GM12878 (cell line): ENCODE measurements at regions of chr14 and their contacts with region 1.

Region 1: DNA sequence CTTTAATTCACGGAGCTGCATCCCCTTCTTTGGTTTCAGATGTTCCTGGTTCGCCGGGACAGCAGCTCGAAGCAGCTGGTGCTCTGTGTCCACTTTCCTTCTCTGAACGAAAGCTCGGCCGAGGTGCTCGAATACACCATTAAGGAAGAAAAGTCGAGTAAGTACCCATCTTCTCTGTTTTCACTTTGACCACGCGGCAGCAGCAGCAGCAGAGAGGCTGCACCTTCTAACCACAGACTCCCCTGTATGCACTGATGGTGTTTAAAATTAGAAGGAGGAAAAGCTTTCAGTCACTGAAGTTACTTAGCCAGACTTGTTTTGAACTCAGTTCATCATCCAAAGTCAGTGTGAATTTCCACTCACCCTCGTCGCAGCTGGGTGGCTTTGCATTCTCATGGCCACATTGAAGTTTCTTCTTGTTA is 63.8 kb downstream of the RIN3 start:
- DNase-seq: peak; percentile 89
- ATAC-seq: peak; percentile 88
- H3K4me3 ChIP-seq: peak overlapping the region; percentile 59; the same call in 1 of the 2 replicates
- H3K27ac ChIP-seq: peak overlapping the region; percentile 45
- H3K4me1 ChIP-seq: peaks cover 40% of the 10 kb centered on the region
- H3K27me3 ChIP-seq: no peaks in the 10 kb centered on the region
- CTCF ChIP-seq: no peak; a peak in 1 of 6 replicates
- EP300 ChIP-seq: peak; percentile 46 to 73; a peak in 2 of 4 replicates
- POLR2A ChIP-seq: no peak
- RAD21 ChIP-seq: peak; percentile 45

Region 2: GRCh38 chr14:92513204-92513973 is 63.9 kb before region 1 on chr14 and contains the start of gene RIN3:
- CTCF ChIA-PET with region 1: interaction called, 3 read pairs
- POLR2A ChIA-PET with region 1: interaction called, 6 read pairs
- RAD21 ChIA-PET with region 1: interaction called, 10 read pairs
- SMC1A ChIA-PET with region 1: interaction called, 6 read pairs
- in situ Hi-C with region 1: no loop called
- intact Hi-C with region 1: no loop called
- DNase-seq: no peak
- ATAC-seq: peak; percentile 83
- H3K4me3 ChIP-seq: peak within 1 kb of the TSS; percentile 49
- H3K27ac ChIP-seq: no peak within 1 kb of the TSS; the same call in 1 of the 2 replicates
- H3K4me1 ChIP-seq: peaks cover 10% of the 10 kb centered on the region
- H3K27me3 ChIP-seq: no peaks in the 10 kb centered on the region; a peak in 1 of 4 replicates
- CTCF ChIP-seq: no peak
- EP300 ChIP-seq: no peak
- POLR2A ChIP-seq: peak; percentile 69
- RAD21 ChIP-seq: no peak
- polyA plus RNA-seq, gene RIN3: 0.91 to 0.95 TPM

Region 3: GRCh38 chr14:92551044-92551841 is 26.1 kb before region 1 on chr14:
- CTCF ChIA-PET with region 1: interaction called, 10 read pairs
- POLR2A ChIA-PET with region 1: interaction called, 5 read pairs
- RAD21 ChIA-PET with region 1: interaction called, 8 read pairs
- SMC1A ChIA-PET with region 1: interaction called, 15 read pairs
- in situ Hi-C with region 1: no loop called
- intact Hi-C with region 1: no loop called
- DNase-seq: peak; percentile 82
- ATAC-seq: peak; percentile 92
- H3K4me3 ChIP-seq: peak overlapping the region; percentile 12; the same call in 1 of the 2 replicates
- H3K27ac ChIP-seq: 0 out of 2 replicates have a peak overlapping the region, but pooled peaks have one; percentile 20
- H3K4me1 ChIP-seq: peaks cover 41% of the 10 kb centered on the region
- H3K27me3 ChIP-seq: no peaks in the 10 kb centered on the region
- CTCF ChIP-seq: peak; percentile 36 to 64 (median 44); a peak in 5 of 6 replicates
- EP300 ChIP-seq: peak; percentile 69 to 75; a peak in 2 of 4 replicates
- POLR2A ChIP-seq: no peak
- RAD21 ChIP-seq: peak; percentile 45

Region 4: GRCh38 chr14:92563359-92563758 is 14.0 kb before region 1 on chr14:
- CTCF ChIA-PET with region 1: interaction called, 35 read pairs
- POLR2A ChIA-PET with region 1: interaction called, 34 read pairs
- RAD21 ChIA-PET with region 1: interaction called, 33 read pairs
- SMC1A ChIA-PET with region 1: interaction called, 137 read pairs
- in situ Hi-C with region 1: no loop called
- intact Hi-C with region 1: no loop called
- DNase-seq: peak; percentile 53
- ATAC-seq: peak; percentile 96
- H3K4me3 ChIP-seq: no peak overlapping the region
- H3K27ac ChIP-seq: no peak overlapping the region; the same call in 1 of the 2 replicates
- H3K4me1 ChIP-seq: peaks cover 24% of the 10 kb centered on the region
- H3K27me3 ChIP-seq: no peaks in the 10 kb centered on the region
- CTCF ChIP-seq: no peak
- EP300 ChIP-seq: peak in 1 of 2 experiments; percentile 78; a peak in 1 of 4 replicates
- POLR2A ChIP-seq: no peak
- RAD21 ChIP-seq: no peak

Region 5: GRCh38 chr14:92680781-92681650 is 103.7 kb after region 1 on chr14:
- CTCF ChIA-PET with region 1: interaction called, 3 read pairs
- POLR2A ChIA-PET with region 1: interaction called, 3 read pairs
- RAD21 ChIA-PET with region 1: interaction called, 21 read pairs
- SMC1A ChIA-PET with region 1: interaction called, 9 read pairs
- in situ Hi-C with region 1: no loop called
- intact Hi-C with region 1: no loop called
- DNase-seq: no peak
- ATAC-seq: peak; percentile 52
- H3K4me3 ChIP-seq: no peak overlapping the region
- H3K27ac ChIP-seq: no peak overlapping the region
- H3K4me1 ChIP-seq: peaks cover 28% of the 10 kb centered on the region
- H3K27me3 ChIP-seq: no peaks in the 10 kb centered on the region
- CTCF ChIP-seq: peak; percentile 84 to 91 (median 90)
- EP300 ChIP-seq: no peak
- POLR2A ChIP-seq: no peak
- RAD21 ChIP-seq: peak; percentile 97

Region 6: GRCh38 chr14:92740440-92740839 is 163.1 kb after region 1 on chr14:
- CTCF ChIA-PET with region 1: no interaction called
- POLR2A ChIA-PET with region 1: no interaction called
- RAD21 ChIA-PET with region 1: no interaction called
- SMC1A ChIA-PET with region 1: no interaction called
- in situ Hi-C with region 1: no loop called
- intact Hi-C with region 1: no loop called
- DNase-seq: no peak
- ATAC-seq: peak; percentile 66
- H3K4me3 ChIP-seq: no peak overlapping the region
- H3K27ac ChIP-seq: no peak overlapping the region
- H3K4me1 ChIP-seq: 0 out of 2 replicates have a peak, but pooled peaks cover 2% of the 10 kb centered on the region
- H3K27me3 ChIP-seq: no peaks in the 10 kb centered on the region
- CTCF ChIP-seq: no peak
- EP300 ChIP-seq: no peak
- POLR2A ChIP-seq: no peak
- RAD21 ChIP-seq: no peak